Naive thymus-derived CD4-positive, alpha-beta T cell (primary cell): ENCODE measurements at regions of chr2 and their contacts with region 1.

Region 1: GRCh38 chr2:241877989-241878970 is 8.8 kb downstream of the RTP5 start:
- DNase-seq: peak; percentile 53 to 85 (median 73)
- ATAC-seq: no peak
- H3K4me3 ChIP-seq: no peak overlapping the region
- H3K4me3 Mint-ChIP-seq: no peak overlapping the region
- H3K27ac ChIP-seq: no peak overlapping the region
- H3K27ac Mint-ChIP-seq: peak overlapping the region in 1 of 9 donors; percentile 62
- H3K4me1 ChIP-seq: peaks cover 15 to 17% of the 10 kb centered on the region in 2 donors
- H3K4me1 Mint-ChIP-seq: peaks cover 17 to 32% (median 21%) of the 10 kb centered on the region in 7 donors
- H3K27me3 ChIP-seq: no peaks in the 10 kb centered on the region
- H3K27me3 Mint-ChIP-seq: peaks cover 0 to 5% (median 0%) of the 10 kb centered on the region in 5 donors

Region 2: GRCh38 chr2:240832205-240832727 is 1046.0 kb before region 1 on chr2:
- CTCF ChIA-PET with region 1: no interaction called
- POLR2A ChIA-PET with region 1: no interaction called
- intact Hi-C with region 1: loop called in 1 of 2 experiments (anchors 1 kb)
- DNase-seq: peak; percentile 93 to 100 (median 99)
- ATAC-seq: peak; percentile 96
- H3K4me3 ChIP-seq: peak overlapping the region; percentile 32
- H3K4me3 Mint-ChIP-seq: peak overlapping the region in 8 of 10 donors; percentile 56 to 78 (median 71)
- H3K27ac ChIP-seq: no peak overlapping the region
- H3K27ac Mint-ChIP-seq: peak overlapping the region in 4 of 9 donors; percentile 22 to 88 (median 74)
- H3K4me1 ChIP-seq: peaks cover 11 to 14% of the 10 kb centered on the region in 2 donors
- H3K4me1 Mint-ChIP-seq: peaks cover 0 to 7% (median 0%) of the 10 kb centered on the region in 7 donors
- H3K27me3 ChIP-seq: no peaks in the 10 kb centered on the region
- H3K27me3 Mint-ChIP-seq: peaks cover 4 to 30% (median 19%) of the 10 kb centered on the region in 5 donors

Region 3: GRCh38 chr2:241315093-241315878 is 563.0 kb before region 1 on chr2 and contains the start of gene HDLBP:
- CTCF ChIA-PET with region 1: no interaction called
- POLR2A ChIA-PET with region 1: no interaction called
- intact Hi-C with region 1: loop called (anchors 1 kb)
- DNase-seq: peak; percentile 100
- ATAC-seq: peak; percentile 87
- H3K4me3 ChIP-seq: peak within 1 kb of the TSS; percentile 98
- H3K4me3 Mint-ChIP-seq: peak within 1 kb of the TSS; percentile 93 to 100 (median 98)
- H3K27ac ChIP-seq: peak within 1 kb of the TSS; percentile 95
- H3K27ac Mint-ChIP-seq: peak within 1 kb of the TSS; percentile 96 to 100 (median 99)
- H3K4me1 ChIP-seq: peaks cover 44 to 48% of the 10 kb centered on the region in 2 donors
- H3K4me1 Mint-ChIP-seq: peaks cover 62 to 84% (median 75%) of the 10 kb centered on the region in 7 donors
- H3K27me3 ChIP-seq: no peaks in the 10 kb centered on the region
- H3K27me3 Mint-ChIP-seq: no peaks in the 10 kb centered on the region
- total RNA-seq, gene HDLBP: 127 to 231 (median 169) TPM

Region 4: DNA sequence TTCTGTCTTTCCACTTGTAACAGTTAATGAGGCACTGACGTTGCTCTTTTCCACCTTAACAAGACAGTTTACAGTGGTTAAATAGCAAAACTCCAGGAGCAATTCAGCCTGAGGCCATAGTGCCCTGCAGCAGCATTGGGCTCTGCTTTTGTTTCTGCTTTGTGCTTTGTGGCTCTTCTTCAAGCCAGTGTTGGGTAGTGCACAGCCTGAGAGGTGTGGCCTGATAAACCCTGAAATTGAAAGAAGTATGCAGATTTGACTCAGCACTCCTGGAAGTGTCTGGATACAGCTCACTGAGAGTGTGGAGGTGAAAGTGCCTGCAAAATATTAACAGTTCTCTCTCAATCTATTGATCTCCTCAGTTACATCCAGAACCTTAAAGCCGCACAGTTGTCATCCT is 432.9 kb before region 1 on chr2:
- CTCF ChIA-PET with region 1: no interaction called
- POLR2A ChIA-PET with region 1: no interaction called
- intact Hi-C with region 1: no loop called
- DNase-seq: peak in 1 of 9 donors; percentile 31
- ATAC-seq: no peak
- H3K4me3 ChIP-seq: no peak overlapping the region
- H3K4me3 Mint-ChIP-seq: peak overlapping the region in 1 of 10 donors; percentile 47
- H3K27ac ChIP-seq: no peak overlapping the region
- H3K27ac Mint-ChIP-seq: no peak overlapping the region
- H3K4me1 ChIP-seq: peaks cover 16 to 17% of the 10 kb centered on the region in 2 donors
- H3K4me1 Mint-ChIP-seq: peaks cover 13 to 25% (median 21%) of the 10 kb centered on the region in 7 donors
- H3K27me3 ChIP-seq: peaks cover 9 to 35% of the 10 kb centered on the region in 2 donors
- H3K27me3 Mint-ChIP-seq: peaks cover 43 to 84% (median 61%) of the 10 kb centered on the region in 5 donors

Region 5: GRCh38 chr2:241586564-241587264 is 291.6 kb before region 1 on chr2:
- CTCF ChIA-PET with region 1: no interaction called
- POLR2A ChIA-PET with region 1: no interaction called
- intact Hi-C with region 1: no loop called
- DNase-seq: no peak
- ATAC-seq: no peak
- H3K4me3 ChIP-seq: no peak overlapping the region
- H3K4me3 Mint-ChIP-seq: no peak overlapping the region
- H3K27ac ChIP-seq: no peak overlapping the region
- H3K27ac Mint-ChIP-seq: no peak overlapping the region
- H3K4me1 ChIP-seq: no peaks in the 10 kb centered on the region
- H3K4me1 Mint-ChIP-seq: peaks cover 0 to 3% (median 0%) of the 10 kb centered on the region in 7 donors
- H3K27me3 ChIP-seq: no peaks in the 10 kb centered on the region
- H3K27me3 Mint-ChIP-seq: no peaks in the 10 kb centered on the region

Region 6: GRCh38 chr2:241609859-241610793 is 268.2 kb before region 1 on chr2:
- CTCF ChIA-PET with region 1: no interaction called
- POLR2A ChIA-PET with region 1: no interaction called
- intact Hi-C with region 1: loop called (anchors 2 to 5 kb)
- DNase-seq: peak; percentile 87 to 92 (median 90)
- ATAC-seq: peak; percentile 99
- H3K4me3 ChIP-seq: peak overlapping the region; percentile 53
- H3K4me3 Mint-ChIP-seq: peak overlapping the region in 9 of 10 donors; percentile 61 to 79 (median 71)
- H3K27ac ChIP-seq: peak overlapping the region; percentile 61
- H3K27ac Mint-ChIP-seq: peak overlapping the region; percentile 9 to 95 (median 68)
- H3K4me1 ChIP-seq: peaks cover 14 to 17% of the 10 kb centered on the region in 2 donors
- H3K4me1 Mint-ChIP-seq: peaks cover 16 to 33% (median 24%) of the 10 kb centered on the region in 7 donors
- H3K27me3 ChIP-seq: no peaks in the 10 kb centered on the region
- H3K27me3 Mint-ChIP-seq: no peaks in the 10 kb centered on the region

Region 7: GRCh38 chr2:241702132-241703031 is 175.9 kb before region 1 on chr2:
- CTCF ChIA-PET with region 1: interaction called, 4 read pairs
- POLR2A ChIA-PET with region 1: interaction called, 6 read pairs
- intact Hi-C with region 1: loop called (anchors 1 kb)
- DNase-seq: peak; percentile 83 to 92 (median 89)
- ATAC-seq: peak; percentile 89
- H3K4me3 ChIP-seq: peak overlapping the region; percentile 74
- H3K4me3 Mint-ChIP-seq: peak overlapping the region; percentile 74 to 89 (median 84)
- H3K27ac ChIP-seq: peak overlapping the region; percentile 75
- H3K27ac Mint-ChIP-seq: peak overlapping the region; percentile 75 to 87 (median 82)
- H3K4me1 ChIP-seq: peaks cover 7 to 12% of the 10 kb centered on the region in 2 donors
- H3K4me1 Mint-ChIP-seq: peaks cover 11 to 38% (median 26%) of the 10 kb centered on the region in 7 donors
- H3K27me3 ChIP-seq: no peaks in the 10 kb centered on the region
- H3K27me3 Mint-ChIP-seq: no peaks in the 10 kb centered on the region

Region 8: DNA sequence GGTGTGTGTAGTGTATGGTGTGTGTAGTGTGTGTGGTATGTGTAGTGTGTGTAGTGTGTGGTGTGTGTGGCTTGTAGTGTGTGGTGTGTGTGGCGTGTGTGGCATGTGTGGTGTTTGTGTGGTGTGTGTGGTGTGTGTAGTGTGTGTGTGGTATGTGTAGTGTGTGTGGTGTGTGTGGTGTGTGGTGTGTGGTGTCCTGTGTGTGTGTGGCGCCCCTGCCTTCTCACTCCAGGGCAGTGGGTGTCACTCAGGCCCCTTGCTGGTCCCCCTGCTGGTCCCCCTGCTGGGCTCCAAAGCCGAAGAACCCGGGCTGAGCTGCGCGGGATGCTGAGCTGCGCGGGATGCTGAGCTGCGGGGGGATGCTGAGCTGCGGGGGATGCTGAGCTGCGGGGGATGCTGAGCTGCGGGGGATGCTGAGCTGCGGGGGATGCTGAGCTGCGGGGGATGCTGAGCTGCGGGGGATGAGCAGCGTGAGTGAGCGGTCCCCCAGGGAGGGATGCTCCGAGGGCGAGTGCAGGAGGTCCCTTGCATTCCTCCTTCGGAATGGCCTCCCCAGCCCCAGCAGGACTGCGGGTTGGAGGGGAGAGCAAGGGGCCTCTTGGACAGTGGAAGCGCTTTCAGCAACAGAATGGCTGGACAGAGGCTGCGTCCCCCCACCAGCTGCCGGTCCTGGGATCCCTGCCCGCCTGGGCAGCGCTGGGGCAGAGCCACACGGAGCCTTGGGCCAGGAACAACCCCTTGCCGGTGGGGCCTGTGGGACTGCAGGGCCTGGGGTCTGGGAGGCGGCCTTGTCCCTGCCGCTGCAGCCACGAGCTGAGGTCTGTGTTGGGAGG is 12.1 kb before region 1 on chr2:
- CTCF ChIA-PET with region 1: interaction called, 17 read pairs
- POLR2A ChIA-PET with region 1: interaction called, 4 read pairs
- intact Hi-C with region 1: no loop called
- DNase-seq: no peak
- ATAC-seq: no peak
- H3K4me3 ChIP-seq: no peak overlapping the region
- H3K4me3 Mint-ChIP-seq: peak overlapping the region in 4 of 10 donors; percentile 14 to 41 (median 25)
- H3K27ac ChIP-seq: no peak overlapping the region
- H3K27ac Mint-ChIP-seq: peak overlapping the region in 3 of 9 donors; percentile 12 to 84 (median 14)
- H3K4me1 ChIP-seq: peaks cover 16 to 95% of the 10 kb centered on the region in 2 donors
- H3K4me1 Mint-ChIP-seq: peaks cover 29 to 61% (median 48%) of the 10 kb centered on the region in 7 donors
- H3K27me3 ChIP-seq: no peaks in the 10 kb centered on the region
- H3K27me3 Mint-ChIP-seq: peaks cover 6 to 43% (median 20%) of the 10 kb centered on the region in 5 donors